ENCODE measurements at regions of chr2 and their contacts with region 1.

Region 1: GRCh38 chr2:27703638-27704341 is 40.1 kb downstream of the SLC4A1AP start:
- DNase-seq: peak; percentile 87
- H3K4me3 ChIP-seq: no peak overlapping the region
- H3K27ac ChIP-seq: no peak overlapping the region
- H3K4me1 ChIP-seq: peaks cover 0 to 31% (median 16%) of the 10 kb centered on the region in 6 donors
- H3K27me3 ChIP-seq: no peaks in the 10 kb centered on the region
- CTCF ChIP-seq: peak; percentile 77 to 94 (median 91)
- POLR2A ChIP-seq: no peak

Region 2: GRCh38 chr2:28452534-28453081 is 748.8 kb after region 1 on chr2:
- intact Hi-C with region 1: loop called (anchors 5 kb)
- DNase-seq: peak; percentile 94
- H3K4me3 ChIP-seq: no peak overlapping the region
- H3K27ac ChIP-seq: peak overlapping the region in 1 of 8 donors; percentile 1
- H3K4me1 ChIP-seq: peaks cover 0 to 36% (median 11%) of the 10 kb centered on the region in 6 donors
- H3K27me3 ChIP-seq: no peaks in the 10 kb centered on the region
- CTCF ChIP-seq: peak; percentile 78 to 94 (median 90)
- POLR2A ChIP-seq: no peak